ENCODE measurements at regions of chr14 and their contacts with region 1.

Region 1: GRCh38 chr14:75307700-75308379 is 29.2 kb downstream of the FOS start:
- DNase-seq: peak; percentile 84 to 88 (median 84)
- ATAC-seq: peak; percentile 86 to 92 (median 90)
- H3K4me3 ChIP-seq: no peak overlapping the region
- H3K27ac ChIP-seq: no peak overlapping the region
- H3K4me1 ChIP-seq: no peaks in the 10 kb centered on the region
- H3K27me3 ChIP-seq: no peaks in the 10 kb centered on the region
- CTCF ChIP-seq: peak; percentile 86 to 94 (median 92)
- POLR2A ChIP-seq: no peak

Region 2: GRCh38 chr14:75132382-75133086 is 175.3 kb before region 1 on chr14:
- intact Hi-C with region 1: loop called in 1 of 2 experiments (anchors 10 kb)
- DNase-seq: no peak
- ATAC-seq: peak; percentile 87 to 96 (median 90)
- H3K4me3 ChIP-seq: no peak overlapping the region
- H3K27ac ChIP-seq: peak overlapping the region in 1 of 3 donors; percentile 16
- H3K4me1 ChIP-seq: peaks cover 0 to 10% (median 0%) of the 10 kb centered on the region in 4 donors
- H3K27me3 ChIP-seq: no peaks in the 10 kb centered on the region
- CTCF ChIP-seq: peak; percentile 67 to 93 (median 70)
- POLR2A ChIP-seq: no peak

Region 3: DNA sequence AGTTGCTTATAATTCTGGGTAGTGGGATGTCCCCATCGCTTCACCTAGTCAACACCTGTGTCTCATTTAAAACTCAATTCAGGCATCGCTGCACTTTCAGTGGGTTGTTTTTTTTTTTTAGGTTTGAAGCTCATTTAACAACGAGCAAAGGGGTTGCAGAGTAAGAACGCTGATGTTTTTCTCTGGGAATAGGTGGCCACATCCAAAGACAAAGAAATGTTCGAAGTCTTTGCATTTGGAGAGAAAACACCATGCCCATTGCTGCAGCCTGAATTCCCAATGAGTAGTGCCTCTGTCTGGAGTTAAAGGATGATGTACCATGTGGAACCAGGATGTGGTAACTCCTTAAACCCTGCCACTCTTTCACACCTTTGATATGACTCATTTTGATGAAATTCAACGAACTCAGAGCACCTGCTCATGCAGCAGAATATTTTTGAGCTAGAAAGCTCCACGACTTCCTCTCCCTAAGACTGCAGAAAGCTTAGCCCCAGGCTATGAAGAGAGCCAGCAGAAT is 179.4 kb after region 1 on chr14:
- intact Hi-C with region 1: loop called (anchors 2 to 5 kb)
- DNase-seq: no peak
- ATAC-seq: peak in 1 of 4 donors; percentile 8
- H3K4me3 ChIP-seq: no peak overlapping the region
- H3K27ac ChIP-seq: no peak overlapping the region
- H3K4me1 ChIP-seq: peaks cover 0 to 10% (median 3%) of the 10 kb centered on the region in 4 donors
- H3K27me3 ChIP-seq: no peaks in the 10 kb centered on the region
- CTCF ChIP-seq: no peak
- POLR2A ChIP-seq: no peak

Measured in right lobe of liver (tissue), 6 donors.